ENCODE measurements at regions of chr12 and their contacts with region 1.

Region 1: GRCh38 chr12:68358532-68359485 is 26.6 kb upstream of the MDM1 start:
- DNase-seq: peak in 4 of 5 donors; percentile 23 to 71 (median 34)
- H3K4me3 ChIP-seq: no peak overlapping the region
- H3K27ac ChIP-seq: no peak overlapping the region
- H3K4me1 ChIP-seq: no peaks in the 10 kb centered on the region
- H3K27me3 ChIP-seq: no peaks in the 10 kb centered on the region
- CTCF ChIP-seq: peak; percentile 25 to 52 (median 50)
- EP300 ChIP-seq: no peak
- POLR2A ChIP-seq: no peak

Region 2: GRCh38 chr12:68686595-68687521 is 328.0 kb after region 1 on chr12 and contains the start of gene NUP107:
- intact Hi-C with region 1: loop called in 1 of 4 experiments (anchors 5 kb)
- DNase-seq: peak; percentile 99 to 100 (median 99)
- H3K4me3 ChIP-seq: peak within 1 kb of the TSS; percentile 96
- H3K27ac ChIP-seq: peak within 1 kb of the TSS in 1 of 2 donors; percentile 62
- H3K4me1 ChIP-seq: peaks cover 2% of the 10 kb centered on the region
- H3K27me3 ChIP-seq: no peaks in the 10 kb centered on the region
- CTCF ChIP-seq: peak in 2 of 3 donors; percentile 17 to 38
- EP300 ChIP-seq: peak; percentile 67
- POLR2A ChIP-seq: peak; percentile 54
- total RNA-seq, gene NUP107: 24.8 to 56.6 (median 46.9) TPM